Heart left ventricle (tissue), 16 donors: ENCODE measurements at regions of chr2 and their contacts with region 1.

Region 1: DNA sequence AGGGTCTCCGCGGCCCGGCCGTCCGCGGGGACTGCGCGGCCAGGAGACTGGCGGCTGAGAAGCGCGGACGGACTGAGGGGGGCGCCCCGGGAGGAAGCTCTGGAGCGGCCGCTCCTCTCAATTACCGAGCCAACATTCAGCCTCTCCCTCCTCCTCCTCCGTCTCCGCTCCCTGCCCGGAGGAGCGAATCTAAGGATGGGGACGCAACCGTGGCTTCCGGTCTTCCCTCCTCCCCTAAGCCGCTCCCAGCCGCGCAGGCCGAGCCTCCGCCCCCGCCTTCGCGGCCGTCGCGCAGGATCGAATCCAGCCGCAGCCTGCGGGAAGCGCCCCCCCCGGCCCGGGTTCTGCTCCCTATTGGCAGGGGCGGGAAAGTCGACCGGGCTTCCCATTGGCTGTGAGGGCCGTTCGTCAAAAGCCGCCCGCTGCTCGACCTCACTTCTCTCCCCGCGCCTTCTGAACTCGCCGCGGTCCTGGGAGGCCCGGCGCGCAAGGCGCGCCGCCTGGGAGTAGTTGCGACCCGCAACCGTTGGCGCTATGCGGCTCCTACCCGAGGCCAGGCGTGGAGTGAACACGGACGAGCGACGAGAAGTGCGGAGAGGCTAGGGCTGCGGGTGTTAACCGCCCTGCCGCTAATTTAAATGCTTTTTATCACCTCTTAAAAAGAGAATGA is at the start of gene HNRNPLL:
- DNase-seq: peak; percentile 99 to 100 (median 99)
- ATAC-seq: peak; percentile 95 to 97 (median 97)
- H3K4me3 ChIP-seq: peak within 1 kb of the TSS; percentile 70 to 96 (median 92)
- H3K27ac ChIP-seq: peak within 1 kb of the TSS; percentile 96 to 100 (median 98)
- H3K4me1 ChIP-seq: peaks cover 0 to 51% (median 36%) of the 10 kb centered on the region in 12 donors
- H3K27me3 ChIP-seq: no peaks in the 10 kb centered on the region
- CTCF ChIP-seq: peak in 1 of 12 donors; percentile 26
- POLR2A ChIP-seq: peak; percentile 75 to 97
- total RNA-seq, gene HNRNPLL: 12.1 to 33.2 (median 23.5) TPM

Region 2: DNA sequence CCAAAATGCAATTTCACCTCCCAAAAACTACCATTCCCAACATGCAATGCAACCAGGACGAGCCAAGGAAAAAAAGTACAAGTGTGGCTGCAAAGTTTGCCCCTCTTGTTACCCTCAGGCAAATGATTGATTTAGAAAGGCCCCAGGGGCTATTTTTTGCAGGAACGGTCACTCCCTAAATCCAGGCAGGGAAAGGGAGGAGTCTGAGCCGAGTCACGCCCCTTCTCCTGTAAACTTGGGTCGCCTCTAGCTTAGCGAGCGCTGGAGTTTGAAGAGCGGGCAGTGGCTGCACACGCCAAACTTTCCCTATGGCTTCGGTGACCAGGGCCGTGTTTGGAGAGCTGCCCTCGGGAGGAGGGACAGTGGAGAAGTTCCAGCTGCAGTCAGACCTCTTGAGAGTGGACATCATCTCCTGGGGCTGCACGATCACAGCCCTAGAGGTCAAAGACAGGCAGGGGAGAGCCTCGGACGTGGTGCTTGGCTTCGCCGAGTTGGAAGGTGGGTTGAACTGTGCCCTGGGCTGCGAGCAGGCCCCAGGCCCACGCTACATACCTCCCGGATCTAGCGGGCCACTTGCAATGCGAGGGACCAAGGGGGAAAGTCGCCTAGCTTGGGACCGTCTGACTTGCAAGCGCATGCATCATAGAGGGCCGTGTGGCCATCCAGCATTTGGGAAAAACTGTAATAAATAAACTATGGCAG is 63.1 kb after region 1 on chr2 and contains the start of gene GALM:
- intact Hi-C with region 1: loop called in 7 of 10 experiments (anchors 2 to 5 kb)
- DNase-seq: peak; percentile 82 to 89 (median 86)
- ATAC-seq: peak; percentile 96 to 97 (median 97)
- H3K4me3 ChIP-seq: peak within 1 kb of the TSS; percentile 33 to 88 (median 70)
- H3K27ac ChIP-seq: peak within 1 kb of the TSS; percentile 11 to 93 (median 71)
- H3K4me1 ChIP-seq: peaks cover 0 to 56% (median 17%) of the 10 kb centered on the region in 12 donors
- H3K27me3 ChIP-seq: no peaks in the 10 kb centered on the region
- CTCF ChIP-seq: peak in 1 of 12 donors; percentile 10
- POLR2A ChIP-seq: peak in 1 of 2 donors; percentile 69
- total RNA-seq, gene GALM: 6.3 to 25.3 (median 11.9) TPM

Region 3: DNA sequence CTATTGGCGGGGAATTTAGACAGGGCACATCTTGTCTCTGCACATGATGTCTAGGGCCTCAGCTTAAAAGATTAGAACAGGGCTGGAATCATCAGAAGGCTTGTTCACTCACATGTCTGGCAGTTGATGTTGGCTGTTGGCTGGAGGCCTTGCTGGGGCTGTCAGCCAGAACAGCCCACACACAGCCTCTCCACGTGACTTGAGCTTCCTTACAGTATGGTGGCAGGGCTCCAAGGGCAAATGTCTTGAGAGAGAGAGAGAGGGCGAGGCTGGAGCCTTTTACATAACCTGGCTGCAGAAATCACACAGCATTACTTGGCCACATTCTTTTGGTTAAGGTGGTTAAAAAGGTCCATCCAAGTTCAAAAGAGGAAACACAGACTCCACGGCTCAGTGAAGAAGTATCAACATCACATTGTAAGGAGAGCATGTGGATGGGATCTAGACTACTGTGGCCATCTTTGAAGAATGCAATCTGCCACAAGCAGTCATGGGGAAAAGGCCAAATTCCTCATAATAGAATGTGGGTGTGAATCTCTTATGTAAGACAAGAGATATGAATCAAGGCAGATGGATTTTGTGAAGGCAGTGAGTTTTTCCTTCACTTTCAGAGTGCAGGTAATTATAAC is 117.9 kb after region 1 on chr2:
- intact Hi-C with region 1: loop called in 6 of 10 experiments (anchors 5 kb)
- DNase-seq: peak; percentile 75 to 84 (median 80)
- ATAC-seq: peak; percentile 86 to 95 (median 94)
- H3K4me3 ChIP-seq: no peak overlapping the region
- H3K27ac ChIP-seq: peak overlapping the region; percentile 2 to 76 (median 48)
- H3K4me1 ChIP-seq: peaks cover 0 to 35% (median 21%) of the 10 kb centered on the region in 12 donors
- H3K27me3 ChIP-seq: no peaks in the 10 kb centered on the region
- CTCF ChIP-seq: no peak
- POLR2A ChIP-seq: no peak

Region 4: DNA sequence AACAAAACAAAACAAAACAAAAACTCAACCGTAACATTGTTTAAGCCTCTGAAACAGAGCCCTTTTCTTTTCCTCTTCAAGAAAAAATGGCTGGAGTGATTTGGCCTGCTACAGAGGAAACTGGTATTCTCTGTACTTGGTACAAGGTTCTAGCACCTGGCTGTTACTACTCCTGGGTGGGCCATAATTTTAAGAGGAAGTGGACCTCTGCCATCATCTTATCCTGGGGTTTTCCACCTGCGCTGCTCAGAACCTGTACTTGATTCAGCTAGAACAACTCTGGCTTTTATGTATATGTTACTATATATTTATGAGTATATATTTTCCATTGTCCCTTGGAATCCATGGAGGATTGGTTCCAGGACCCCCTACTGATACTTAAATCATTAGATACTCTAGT is 125.8 kb after region 1 on chr2:
- intact Hi-C with region 1: loop called in 6 of 10 experiments (anchors 5 kb)
- DNase-seq: no peak
- ATAC-seq: no peak
- H3K4me3 ChIP-seq: no peak overlapping the region
- H3K27ac ChIP-seq: no peak overlapping the region
- H3K4me1 ChIP-seq: peaks cover 0 to 13% (median 0%) of the 10 kb centered on the region in 12 donors
- H3K27me3 ChIP-seq: no peaks in the 10 kb centered on the region
- CTCF ChIP-seq: no peak
- POLR2A ChIP-seq: no peak

Region 5: GRCh38 chr2:38734299-38735058 is 131.6 kb after region 1 on chr2:
- intact Hi-C with region 1: loop called in 2 of 10 experiments (anchors 5 kb)
- DNase-seq: peak in 2 of 5 donors; percentile 37 to 45
- ATAC-seq: peak in 2 of 4 donors; percentile 32 to 63
- H3K4me3 ChIP-seq: no peak overlapping the region
- H3K27ac ChIP-seq: peak overlapping the region in 3 of 12 donors; percentile 2 to 54 (median 16)
- H3K4me1 ChIP-seq: peaks cover 0 to 29% (median 11%) of the 10 kb centered on the region in 12 donors
- H3K27me3 ChIP-seq: no peaks in the 10 kb centered on the region
- CTCF ChIP-seq: no peak
- POLR2A ChIP-seq: no peak

Region 6: DNA sequence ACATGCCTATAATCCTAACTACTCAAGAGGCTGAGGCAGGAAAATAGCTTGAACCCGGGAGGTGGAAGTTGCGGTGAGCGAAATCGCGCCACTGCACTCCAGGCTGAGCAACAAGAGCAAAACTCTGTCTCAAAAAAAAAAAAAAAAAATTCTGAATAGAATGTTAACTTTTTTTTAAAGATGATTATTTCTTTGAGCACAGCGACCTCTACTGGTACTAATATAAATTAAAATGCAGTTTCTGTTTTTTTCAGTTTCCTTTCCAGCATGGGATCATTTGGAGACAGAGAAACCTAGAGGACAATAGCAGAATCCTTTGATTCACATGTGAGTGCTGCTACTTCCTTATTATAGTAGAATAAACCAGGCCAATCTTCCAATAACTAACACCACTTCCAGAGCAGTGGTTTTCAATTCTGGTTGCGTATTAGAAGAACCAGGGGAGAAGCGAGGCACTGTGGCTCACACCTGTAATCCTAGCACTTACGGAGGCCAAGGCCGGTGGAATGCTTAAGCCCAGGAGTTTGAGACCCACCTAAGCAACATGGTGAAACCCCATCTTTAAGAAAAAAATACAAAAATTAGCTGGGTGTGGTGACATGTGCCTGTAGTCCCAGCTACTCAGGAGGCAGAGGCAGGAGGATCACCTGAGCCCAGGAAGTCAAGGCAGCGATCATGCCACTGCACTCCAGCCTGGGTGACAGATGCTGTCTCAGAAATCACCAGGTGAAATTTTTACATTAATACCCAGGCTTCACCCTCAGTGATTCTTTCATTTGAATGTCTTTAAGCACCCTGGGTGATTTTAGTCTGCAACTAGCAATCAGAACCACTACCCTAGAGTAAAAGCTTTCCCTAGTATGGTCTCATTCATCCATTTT is 138.2 kb after region 1 on chr2:
- intact Hi-C with region 1: loop called in 3 of 10 experiments (anchors 5 kb)
- DNase-seq: no peak
- ATAC-seq: peak in 2 of 4 donors; percentile 17 to 59
- H3K4me3 ChIP-seq: peak overlapping the region in 2 of 12 donors; percentile 13 to 20
- H3K27ac ChIP-seq: peak overlapping the region in 6 of 12 donors; percentile 3 to 75 (median 16)
- H3K4me1 ChIP-seq: peaks cover 0 to 48% (median 9%) of the 10 kb centered on the region in 12 donors
- H3K27me3 ChIP-seq: no peaks in the 10 kb centered on the region
- CTCF ChIP-seq: peak; percentile 52 to 83 (median 68)
- POLR2A ChIP-seq: no peak

Region 7: DNA sequence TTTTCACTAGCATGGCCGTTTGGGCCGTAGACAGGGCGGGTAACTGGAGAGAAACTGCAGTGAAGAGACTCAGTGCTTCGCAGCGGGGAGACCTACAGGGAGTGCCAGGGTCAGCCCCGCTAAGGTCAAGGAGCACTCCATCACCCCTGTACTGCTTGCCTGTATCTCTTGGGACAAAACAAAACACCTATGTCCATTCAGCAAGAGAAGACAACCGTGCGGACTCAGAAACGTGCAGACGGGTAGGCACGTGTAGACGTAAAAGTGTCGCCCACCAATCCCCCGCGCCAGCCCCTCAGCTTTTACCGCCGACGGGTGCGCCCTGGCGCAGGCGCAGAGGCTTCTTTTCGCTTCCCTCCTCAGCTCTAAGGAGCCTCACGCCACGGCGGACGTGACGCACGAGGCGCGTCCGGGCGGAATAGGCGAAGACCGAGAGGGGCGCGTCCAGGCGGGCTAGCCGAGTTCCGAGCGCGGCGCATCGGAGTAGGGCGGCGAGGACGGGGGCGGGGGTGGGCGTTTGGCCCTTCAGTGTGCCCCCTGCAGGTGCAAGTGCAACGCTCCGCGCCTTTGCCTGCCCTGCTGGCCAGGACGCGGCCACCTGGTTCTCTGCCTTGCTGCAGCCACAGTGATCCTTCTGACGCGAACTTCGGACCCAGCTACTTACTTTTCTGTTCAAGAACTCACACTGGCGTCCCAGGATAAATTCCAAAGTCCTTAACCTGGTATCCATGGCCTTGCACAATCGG is 521.3 kb after region 1 on chr2:
- intact Hi-C with region 1: loop called in 1 of 10 experiments (anchors 5 kb)
- DNase-seq: peak; percentile 95 to 98 (median 98)
- ATAC-seq: peak; percentile 84 to 94 (median 93)
- H3K4me3 ChIP-seq: peak overlapping the region; percentile 37 to 94 (median 76)
- H3K27ac ChIP-seq: peak overlapping the region; percentile 82 to 96 (median 92)
- H3K4me1 ChIP-seq: peaks cover 0 to 50% (median 18%) of the 10 kb centered on the region in 12 donors
- H3K27me3 ChIP-seq: no peaks in the 10 kb centered on the region
- CTCF ChIP-seq: peak; percentile 44 to 75 (median 66)
- POLR2A ChIP-seq: peak in 1 of 2 donors; percentile 88

Region 8: GRCh38 chr2:40160751-40161218 is 1557.9 kb after region 1 on chr2:
- intact Hi-C with region 1: no loop called
- DNase-seq: no peak
- ATAC-seq: peak in 1 of 4 donors; percentile 18
- H3K4me3 ChIP-seq: no peak overlapping the region
- H3K27ac ChIP-seq: peak overlapping the region in 3 of 12 donors; percentile 10 to 49 (median 17)
- H3K4me1 ChIP-seq: peaks cover 0 to 29% (median 15%) of the 10 kb centered on the region in 12 donors
- H3K27me3 ChIP-seq: no peaks in the 10 kb centered on the region
- CTCF ChIP-seq: no peak
- POLR2A ChIP-seq: no peak